AG04450 (cell line): ENCODE measurements at regions of chr12 and their contacts with region 1.

Region 1: GRCh38 chr12:3060778-3061458 is 16.3 kb upstream of the TSPAN9 start:
- DNase-seq: no peak
- H3K4me3 ChIP-seq: no peak overlapping the region
- H3K27ac ChIP-seq: no peak overlapping the region
- H3K27me3 ChIP-seq: peaks cover 22% of the 10 kb centered on the region
- CTCF ChIP-seq: no peak

Region 2: GRCh38 chr12:3041558-3042164 is 19.3 kb before region 1 on chr12:
- CTCF ChIA-PET with region 1: interaction called, 13 read pairs
- POLR2A ChIA-PET with region 1: no interaction called
- DNase-seq: peak; percentile 38
- H3K4me3 ChIP-seq: no peak overlapping the region
- H3K27ac ChIP-seq: no peak overlapping the region
- H3K27me3 ChIP-seq: no peaks in the 10 kb centered on the region
- CTCF ChIP-seq: peak; percentile 76

Region 3: GRCh38 chr12:3083921-3084347 is 23.0 kb after region 1 on chr12:
- CTCF ChIA-PET with region 1: no interaction called
- POLR2A ChIA-PET with region 1: no interaction called
- DNase-seq: no peak
- H3K4me3 ChIP-seq: no peak overlapping the region
- H3K27ac ChIP-seq: no peak overlapping the region
- H3K27me3 ChIP-seq: no peaks in the 10 kb centered on the region
- CTCF ChIP-seq: no peak